ENCODE measurements at regions of chr7 and their contacts with region 1.

Region 1: GRCh38 chr7:80018941-80019752 is 115.5 kb upstream of the GNAI1 start:
- DNase-seq: peak in 1 of 2 experiments; percentile 29
- H3K4me3 ChIP-seq: peak overlapping the region; percentile 11; the same call in 1 of the 2 replicates
- H3K27ac ChIP-seq: no peak overlapping the region
- H3K4me1 ChIP-seq: peaks cover 7% of the 10 kb centered on the region
- H3K27me3 ChIP-seq: no peaks in the 10 kb centered on the region
- CTCF ChIP-seq: peak; percentile 99

Region 2: GRCh38 chr7:79290841-79291497 is 728.2 kb before region 1 on chr7:
- CTCF ChIA-PET with region 1: no interaction called
- POLR2A ChIA-PET with region 1: no interaction called
- intact Hi-C with region 1: loop called (anchors 5 kb)
- DNase-seq: no peak
- H3K4me3 ChIP-seq: no peak overlapping the region
- H3K27ac ChIP-seq: no peak overlapping the region
- H3K4me1 ChIP-seq: no peaks in the 10 kb centered on the region
- H3K27me3 ChIP-seq: no peaks in the 10 kb centered on the region
- CTCF ChIP-seq: no peak

Region 3: GRCh38 chr7:79806161-79806734 is 212.9 kb before region 1 on chr7:
- CTCF ChIA-PET with region 1: no interaction called
- POLR2A ChIA-PET with region 1: no interaction called
- intact Hi-C with region 1: loop called (anchors 5 kb)
- DNase-seq: no peak
- H3K4me3 ChIP-seq: no peak overlapping the region
- H3K27ac ChIP-seq: no peak overlapping the region
- H3K4me1 ChIP-seq: no peaks in the 10 kb centered on the region
- H3K27me3 ChIP-seq: no peaks in the 10 kb centered on the region
- CTCF ChIP-seq: peak; percentile 53